IMR-90 (cell line): ENCODE measurements at regions of chr2 and their contacts with region 1.

Region 1: GRCh38 chr2:44186810-44187209 is 18.1 kb downstream of the PPM1B start:
- DNase-seq: no peak
- ATAC-seq: peak; percentile 51
- H3K4me3 ChIP-seq: no peak overlapping the region
- H3K27ac ChIP-seq: no peak overlapping the region
- H3K4me1 ChIP-seq: no peaks in the 10 kb centered on the region
- H3K27me3 ChIP-seq: no peaks in the 10 kb centered on the region
- CTCF ChIP-seq: no peak
- POLR2A ChIP-seq: no peak
- RAD21 ChIP-seq: no peak

Region 2: DNA sequence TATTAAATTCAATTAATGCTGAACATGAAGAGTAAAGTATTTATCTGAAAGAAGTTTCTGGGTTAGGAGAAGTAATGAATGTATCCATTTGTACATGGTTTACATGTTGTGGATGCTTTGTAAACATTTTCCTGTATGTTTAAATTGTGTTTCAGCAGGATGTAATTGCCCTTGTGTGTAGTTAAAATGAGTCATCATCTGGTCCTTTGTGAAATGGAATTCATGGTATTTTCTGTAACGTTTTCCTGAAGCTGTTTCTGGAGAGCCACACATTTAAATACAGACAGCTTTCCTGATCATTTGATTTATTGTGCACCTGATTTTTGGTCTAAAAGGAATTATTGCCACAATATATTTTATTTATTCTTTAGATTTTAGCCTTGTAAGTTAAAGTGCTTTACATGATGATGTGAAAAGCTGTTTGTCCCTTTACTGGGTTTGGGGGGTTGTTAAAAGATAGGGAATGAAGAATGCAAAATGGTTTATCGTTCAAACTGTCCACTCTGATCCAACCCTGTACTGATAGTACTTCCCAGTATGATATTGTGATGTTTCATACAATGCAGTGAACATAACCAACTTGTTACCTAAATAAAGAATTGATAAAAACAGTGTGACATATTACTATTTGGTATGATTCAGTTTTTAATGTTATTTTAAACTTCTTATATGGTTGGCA is 46.8 kb after region 1 on chr2:
- CTCF ChIA-PET with region 1: no interaction called
- POLR2A ChIA-PET with region 1: interaction called, 5 read pairs
- dilution Hi-C with region 1: no loop called
- in situ Hi-C with region 1: no loop called
- intact Hi-C with region 1: loop called (anchors 1 kb)
- DNase-seq: peak; percentile 85
- ATAC-seq: peak; percentile 94
- H3K4me3 ChIP-seq: no peak overlapping the region
- H3K27ac ChIP-seq: peak overlapping the region; percentile 50; the same call in 1 of the 2 replicates
- H3K4me1 ChIP-seq: peaks cover 2% of the 10 kb centered on the region; the same call in 1 of the 2 replicates
- H3K27me3 ChIP-seq: no peaks in the 10 kb centered on the region
- CTCF ChIP-seq: no peak
- POLR2A ChIP-seq: no peak
- RAD21 ChIP-seq: 0 out of 2 replicates have a peak, but pooled peaks have one; percentile 4